ENCODE measurements at regions of chr6 and their contacts with region 1.

Region 1: DNA sequence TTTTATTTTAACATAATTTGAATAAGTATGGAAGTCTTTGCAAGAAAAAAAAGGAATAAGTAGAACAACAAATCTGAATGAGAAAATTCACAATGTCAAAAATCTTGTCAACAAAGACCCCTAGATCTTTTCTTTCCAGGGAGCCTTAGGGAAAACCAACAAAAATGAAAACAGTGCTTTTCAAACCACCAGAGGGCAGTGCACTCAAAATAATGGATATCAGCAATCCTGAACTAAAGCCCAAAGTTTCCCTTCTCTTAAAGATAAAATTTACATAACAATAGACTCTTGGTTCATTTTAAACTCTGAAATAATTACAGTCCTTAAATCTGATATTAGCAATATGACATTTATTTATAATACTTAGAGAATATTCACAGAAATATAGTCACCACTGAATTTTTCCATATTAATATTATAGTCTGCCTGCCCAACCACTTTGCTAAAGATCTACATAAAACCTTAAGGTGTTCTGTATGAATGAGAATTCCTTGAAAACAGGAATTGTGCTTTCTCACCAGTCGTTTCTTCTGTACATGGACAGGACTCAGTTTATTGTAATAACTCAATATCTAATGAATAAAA is 105.3 kb upstream of the BMP5 start:
- DNase-seq: no peak
- H3K4me3 ChIP-seq: no peak overlapping the region
- H3K27ac ChIP-seq: no peak overlapping the region
- H3K4me1 ChIP-seq: no peaks in the 10 kb centered on the region
- H3K27me3 ChIP-seq: no peaks in the 10 kb centered on the region
- CTCF ChIP-seq: peak; percentile 54 to 79 (median 71)

Region 2: DNA sequence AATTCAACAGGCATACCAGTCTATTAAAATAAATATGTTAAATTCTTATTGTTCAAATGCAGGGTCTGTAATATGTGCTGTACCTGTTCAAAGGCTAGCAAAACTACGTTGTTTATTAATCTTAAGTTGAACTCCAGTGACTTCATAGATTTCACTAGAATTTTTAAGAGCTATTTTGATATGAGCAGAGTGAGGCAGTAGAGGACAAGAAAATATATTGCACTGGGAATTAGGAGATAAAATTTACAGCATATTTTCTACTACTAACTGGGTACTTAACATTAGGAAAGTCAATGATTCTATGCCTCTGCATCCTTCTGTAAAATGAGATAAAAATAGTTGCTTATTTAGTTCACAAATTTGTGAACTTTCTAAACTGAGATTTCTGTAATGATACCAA is 56.9 kb after region 1 on chr6:
- intact Hi-C with region 1: loop called (anchors 10 kb)
- DNase-seq: no peak
- H3K4me3 ChIP-seq: no peak overlapping the region
- H3K27ac ChIP-seq: no peak overlapping the region
- H3K4me1 ChIP-seq: peaks cover 0 to 3% of the 10 kb centered on the region in 2 donors
- H3K27me3 ChIP-seq: no peaks in the 10 kb centered on the region
- CTCF ChIP-seq: peak in 2 of 3 experiments; percentile 17 to 34

Region 3: GRCh38 chr6:56156643-56157042 is 175.9 kb after region 1 on chr6:
- intact Hi-C with region 1: loop called (anchors 10 kb)
- DNase-seq: no peak
- H3K4me3 ChIP-seq: no peak overlapping the region
- H3K27ac ChIP-seq: no peak overlapping the region
- H3K4me1 ChIP-seq: no peaks in the 10 kb centered on the region
- H3K27me3 ChIP-seq: no peaks in the 10 kb centered on the region
- CTCF ChIP-seq: no peak

Region 4: DNA sequence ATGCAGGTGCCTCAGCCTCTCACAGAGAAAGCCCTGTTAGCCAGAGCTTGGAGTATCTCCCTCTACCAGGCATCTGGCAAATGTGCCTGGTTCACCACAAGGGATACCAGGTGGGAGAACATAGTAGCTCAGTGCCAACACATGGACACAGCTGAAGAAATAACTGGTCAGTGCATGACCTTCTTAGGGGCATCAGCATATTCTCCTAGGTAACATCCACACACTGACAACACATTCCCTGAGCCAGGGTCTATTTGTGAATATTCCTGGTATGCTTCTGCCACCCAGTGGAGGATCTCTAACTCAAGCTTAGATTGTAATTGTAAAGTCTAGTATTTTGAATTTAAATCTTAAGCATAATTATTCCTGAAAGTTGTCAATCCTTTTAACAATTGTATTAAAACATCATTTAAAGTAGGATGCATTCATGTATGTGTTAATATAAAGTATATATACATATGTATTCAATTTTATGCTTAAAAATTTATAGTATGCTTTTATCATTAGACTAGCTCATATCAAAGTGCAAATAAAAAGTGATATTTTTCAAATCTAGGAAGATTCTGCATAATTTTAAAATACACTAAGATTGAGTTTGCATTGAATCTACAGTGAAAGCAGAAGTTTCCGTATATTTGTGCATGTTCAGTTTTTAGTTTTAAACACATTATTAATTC is 311.9 kb after region 1 on chr6:
- intact Hi-C with region 1: loop called (anchors 1 kb)
- DNase-seq: no peak
- H3K4me3 ChIP-seq: no peak overlapping the region
- H3K27ac ChIP-seq: no peak overlapping the region
- H3K4me1 ChIP-seq: peaks cover 0 to 6% of the 10 kb centered on the region in 2 donors
- H3K27me3 ChIP-seq: no peaks in the 10 kb centered on the region
- CTCF ChIP-seq: peak; percentile 58 to 74 (median 62)